ENCODE measurements at regions of chr5 and their contacts with region 1.

Region 1: DNA sequence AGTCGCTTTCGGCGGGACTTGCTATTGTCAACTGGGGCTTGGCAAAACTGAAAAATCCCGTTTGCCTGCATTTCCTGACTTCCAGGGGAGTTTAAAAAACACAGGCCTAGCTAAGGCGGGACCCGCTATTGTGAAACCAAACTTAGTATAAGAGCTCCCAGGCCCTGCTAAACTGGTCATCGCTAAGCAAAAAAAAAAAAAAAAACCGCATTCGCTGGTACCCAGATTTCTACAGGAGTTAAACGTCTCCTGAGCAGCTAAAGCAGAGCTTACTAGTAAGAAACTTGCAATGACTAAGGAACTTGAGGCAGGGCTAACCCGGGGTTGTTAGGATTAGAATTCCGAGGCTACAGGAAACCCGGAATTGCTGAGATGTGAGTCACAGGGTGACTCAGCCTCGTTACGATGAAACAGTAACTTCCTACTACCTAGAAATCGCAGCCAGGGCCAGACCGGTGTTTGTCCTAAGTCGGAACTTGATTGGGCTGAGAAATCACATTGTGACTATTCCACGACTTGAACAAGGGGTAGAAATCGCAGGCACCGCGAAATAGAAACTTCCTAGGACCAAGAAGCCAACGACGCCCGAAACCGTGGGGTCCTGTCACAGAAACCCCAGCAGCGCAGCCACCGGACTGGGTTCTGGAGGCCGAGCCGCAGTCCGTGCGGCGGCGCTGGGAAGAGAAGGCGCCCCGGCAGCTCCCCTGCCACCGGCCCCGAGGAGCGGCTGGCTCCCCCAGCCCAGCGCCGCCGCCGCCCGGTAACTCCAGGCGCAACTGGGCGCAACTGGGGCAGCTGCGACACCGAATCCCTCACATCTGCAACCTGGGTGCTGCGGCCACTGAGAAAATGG is 89.5 kb downstream of the ANXA2R start:
- DNase-seq: peak; percentile 66 to 85
- ATAC-seq: peak; percentile 38 to 66 (median 53)
- H3K4me3 ChIP-seq: peak overlapping the region; percentile 73
- H3K4me3 Mint-ChIP-seq: peak overlapping the region; percentile 88
- H3K27ac ChIP-seq: peak overlapping the region; percentile 98
- H3K27ac Mint-ChIP-seq: peak overlapping the region; percentile 97 to 99
- H3K4me1 ChIP-seq: peaks cover 45% of the 10 kb centered on the region
- H3K4me1 Mint-ChIP-seq: peaks cover 33 to 44% of the 10 kb centered on the region in 2 donors
- H3K27me3 ChIP-seq: no peaks in the 10 kb centered on the region
- H3K27me3 Mint-ChIP-seq: no peaks in the 10 kb centered on the region
- CTCF ChIP-seq: no peak

Region 2: GRCh38 chr5:42994246-42995151 is 43.8 kb after region 1 on chr5:
- intact Hi-C with region 1: loop called (anchors 1 kb)
- DNase-seq: peak; percentile 82 to 94
- ATAC-seq: peak; percentile 63 to 81 (median 64)
- H3K4me3 ChIP-seq: peak overlapping the region; percentile 69
- H3K4me3 Mint-ChIP-seq: peak overlapping the region; percentile 98
- H3K27ac ChIP-seq: peak overlapping the region; percentile 95
- H3K27ac Mint-ChIP-seq: peak overlapping the region; percentile 95 to 99
- H3K4me1 ChIP-seq: peaks cover 40% of the 10 kb centered on the region
- H3K4me1 Mint-ChIP-seq: peaks cover 44 to 46% of the 10 kb centered on the region in 2 donors
- H3K27me3 ChIP-seq: no peaks in the 10 kb centered on the region
- H3K27me3 Mint-ChIP-seq: no peaks in the 10 kb centered on the region
- CTCF ChIP-seq: peak; percentile 85

Region 3: GRCh38 chr5:43019614-43020293 is 69.1 kb after region 1 on chr5:
- intact Hi-C with region 1: loop called (anchors 1 kb)
- DNase-seq: peak; percentile 73 to 96
- ATAC-seq: peak; percentile 64 to 83 (median 64)
- H3K4me3 ChIP-seq: peak overlapping the region; percentile 58
- H3K4me3 Mint-ChIP-seq: peak overlapping the region; percentile 91
- H3K27ac ChIP-seq: peak overlapping the region; percentile 93
- H3K27ac Mint-ChIP-seq: peak overlapping the region; percentile 99 to 100
- H3K4me1 ChIP-seq: peaks cover 22% of the 10 kb centered on the region
- H3K4me1 Mint-ChIP-seq: peaks cover 45 to 56% of the 10 kb centered on the region in 2 donors
- H3K27me3 ChIP-seq: no peaks in the 10 kb centered on the region
- H3K27me3 Mint-ChIP-seq: no peaks in the 10 kb centered on the region
- CTCF ChIP-seq: peak; percentile 61

Region 4: DNA sequence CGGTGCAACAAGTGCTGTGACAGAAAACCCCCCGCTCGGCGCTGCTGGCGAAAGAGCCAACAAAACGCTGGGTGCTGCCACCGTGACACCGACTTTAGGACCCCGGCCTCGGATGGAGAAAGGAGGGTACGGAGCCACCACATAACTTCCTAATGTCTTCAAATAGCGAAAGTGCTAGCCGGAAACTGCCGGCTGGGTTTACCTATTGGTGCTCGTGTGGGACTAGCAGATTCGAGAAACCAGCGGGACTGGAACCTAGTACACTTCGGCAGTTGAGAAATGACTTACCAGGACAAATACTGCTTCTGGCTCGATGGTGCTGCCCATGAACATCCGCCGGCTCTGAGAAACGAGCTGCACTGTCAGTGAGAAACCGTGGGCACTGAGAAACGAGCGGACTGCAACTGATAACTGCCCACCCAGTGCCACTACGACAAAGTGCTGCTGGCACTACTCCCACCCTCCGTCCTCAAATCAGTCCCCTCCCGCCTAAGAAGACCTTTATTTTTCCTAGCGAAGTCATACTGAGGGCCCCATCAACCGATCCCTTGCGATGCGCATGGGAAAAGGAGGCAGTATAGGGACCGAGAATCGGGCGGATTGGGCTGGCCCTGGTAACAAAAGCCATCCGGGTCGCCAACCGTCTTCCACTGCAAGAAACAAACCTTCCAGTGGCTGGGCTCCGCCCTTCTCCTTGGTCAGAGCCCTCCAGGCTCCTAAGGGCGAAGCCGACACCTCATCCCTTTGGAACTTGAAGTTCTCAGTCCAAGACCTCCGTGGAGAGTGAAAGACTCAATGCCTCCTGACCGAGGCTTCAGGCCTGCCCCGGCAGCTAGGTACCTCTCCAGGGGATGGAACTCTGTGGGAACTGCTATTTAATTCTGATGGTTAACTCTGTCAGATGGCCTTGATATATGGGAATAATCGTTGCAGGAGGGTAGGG is 116.4 kb after region 1 on chr5:
- intact Hi-C with region 1: loop called (anchors 1 kb)
- DNase-seq: peak; percentile 87 to 95
- ATAC-seq: peak; percentile 51 to 74 (median 57)
- H3K4me3 ChIP-seq: peak overlapping the region; percentile 72
- H3K4me3 Mint-ChIP-seq: peak overlapping the region; percentile 100
- H3K27ac ChIP-seq: peak overlapping the region; percentile 96
- H3K27ac Mint-ChIP-seq: peak overlapping the region; percentile 97 to 100
- H3K4me1 ChIP-seq: peaks cover 46% of the 10 kb centered on the region
- H3K4me1 Mint-ChIP-seq: peaks cover 41 to 51% of the 10 kb centered on the region in 2 donors
- H3K27me3 ChIP-seq: no peaks in the 10 kb centered on the region
- H3K27me3 Mint-ChIP-seq: no peaks in the 10 kb centered on the region
- CTCF ChIP-seq: no peak

Region 5: GRCh38 chr5:43120720-43121564 is 170.3 kb after region 1 on chr5 and contains the start of gene ZNF131:
- intact Hi-C with region 1: loop called (anchors 5 kb)
- DNase-seq: peak; percentile 99
- ATAC-seq: peak; percentile 87 to 96 (median 89)
- H3K4me3 ChIP-seq: peak within 1 kb of the TSS; percentile 59
- H3K4me3 Mint-ChIP-seq: peak within 1 kb of the TSS; percentile 87
- H3K27ac ChIP-seq: peak within 1 kb of the TSS; percentile 88
- H3K27ac Mint-ChIP-seq: peak within 1 kb of the TSS; percentile 88 to 99
- H3K4me1 ChIP-seq: peaks cover 13% of the 10 kb centered on the region
- H3K4me1 Mint-ChIP-seq: peaks cover 26 to 29% of the 10 kb centered on the region in 2 donors
- H3K27me3 ChIP-seq: no peaks in the 10 kb centered on the region
- H3K27me3 Mint-ChIP-seq: no peaks in the 10 kb centered on the region
- CTCF ChIP-seq: no peak
- total RNA-seq, gene ZNF131: 69.0 to 84.0 (median 83.5) TPM

Region 6: DNA sequence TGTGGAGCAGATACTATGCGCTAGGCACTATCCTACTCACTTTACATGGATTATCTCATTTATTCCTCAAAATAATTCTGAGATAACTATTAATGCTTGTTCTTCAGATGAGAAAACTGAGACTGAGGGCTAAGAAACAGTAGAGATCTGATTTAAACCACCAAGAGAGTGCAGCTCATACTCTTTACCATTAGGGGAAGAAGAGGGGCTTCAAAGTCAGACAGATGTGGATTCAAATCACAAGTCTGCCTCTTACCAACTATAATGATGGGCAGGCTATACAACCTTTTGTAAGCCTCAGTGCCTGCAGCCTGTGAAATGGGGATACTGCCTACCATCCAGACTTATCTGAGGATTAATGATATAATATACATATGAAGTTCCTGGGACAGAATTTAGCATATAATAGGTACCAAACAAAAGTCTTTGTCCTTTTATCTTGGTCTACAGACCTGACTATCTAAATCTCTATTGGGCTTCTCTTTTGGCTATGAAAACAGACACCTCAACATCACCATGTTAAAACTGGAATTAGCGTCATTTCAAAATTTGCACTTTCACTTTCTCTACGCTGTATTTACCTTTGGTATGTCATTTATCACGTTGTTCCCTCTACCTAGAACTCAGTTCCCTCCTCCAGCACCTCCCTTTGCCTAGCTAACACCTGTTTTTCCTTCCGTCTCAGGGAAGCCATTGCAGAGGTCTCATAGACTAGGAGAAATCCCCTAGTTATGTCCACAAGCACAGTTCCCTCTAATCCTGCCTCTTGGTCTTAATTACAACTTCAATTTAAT is 546.8 kb after region 1 on chr5:
- intact Hi-C with region 1: no loop called
- DNase-seq: no peak
- ATAC-seq: no peak
- H3K4me3 ChIP-seq: no peak overlapping the region
- H3K4me3 Mint-ChIP-seq: no peak overlapping the region
- H3K27ac ChIP-seq: no peak overlapping the region
- H3K27ac Mint-ChIP-seq: no peak overlapping the region
- H3K4me1 ChIP-seq: no peaks in the 10 kb centered on the region
- H3K4me1 Mint-ChIP-seq: no peaks in the 10 kb centered on the region
- H3K27me3 ChIP-seq: no peaks in the 10 kb centered on the region
- H3K27me3 Mint-ChIP-seq: no peaks in the 10 kb centered on the region
- CTCF ChIP-seq: no peak

Region 7: GRCh38 chr5:43556857-43557542 is 606.3 kb after region 1 on chr5 and contains the start of gene PAIP1:
- intact Hi-C with region 1: loop called (anchors 5 kb)
- DNase-seq: peak; percentile 82 to 91
- ATAC-seq: peak; percentile 86 to 92 (median 87)
- H3K4me3 ChIP-seq: peak within 1 kb of the TSS; percentile 86
- H3K4me3 Mint-ChIP-seq: peak within 1 kb of the TSS; percentile 92
- H3K27ac ChIP-seq: peak within 1 kb of the TSS; percentile 87
- H3K27ac Mint-ChIP-seq: peak within 1 kb of the TSS; percentile 92 to 93
- H3K4me1 ChIP-seq: peaks cover 13% of the 10 kb centered on the region
- H3K4me1 Mint-ChIP-seq: peaks cover 6 to 13% of the 10 kb centered on the region in 2 donors
- H3K27me3 ChIP-seq: no peaks in the 10 kb centered on the region
- H3K27me3 Mint-ChIP-seq: no peaks in the 10 kb centered on the region
- CTCF ChIP-seq: peak; percentile 77
- total RNA-seq, gene PAIP1: 22.4 to 35.1 (median 29.2) TPM